Activated B cell treated with CpG ODN at 0.5 μM for 24 hours (primary cell): ENCODE measurements at regions of chr17 and their contacts with region 1.

Region 1: GRCh38 chr17:43024407-43025289 is at the start of gene RND2:
- DNase-seq: peak; percentile 79
- ATAC-seq: peak; percentile 65
- H3K4me3 Mint-ChIP-seq: peak within 1 kb of the TSS; percentile 92
- H3K27ac Mint-ChIP-seq: peak within 1 kb of the TSS; percentile 87
- H3K4me1 Mint-ChIP-seq: peaks cover 24% of the 10 kb centered on the region
- H3K27me3 Mint-ChIP-seq: no peaks in the 10 kb centered on the region
- CTCF ChIP-seq: no peak
- total RNA-seq, gene RND2: 0.05 and 0.13 TPM in 2 replicates

Region 2: DNA sequence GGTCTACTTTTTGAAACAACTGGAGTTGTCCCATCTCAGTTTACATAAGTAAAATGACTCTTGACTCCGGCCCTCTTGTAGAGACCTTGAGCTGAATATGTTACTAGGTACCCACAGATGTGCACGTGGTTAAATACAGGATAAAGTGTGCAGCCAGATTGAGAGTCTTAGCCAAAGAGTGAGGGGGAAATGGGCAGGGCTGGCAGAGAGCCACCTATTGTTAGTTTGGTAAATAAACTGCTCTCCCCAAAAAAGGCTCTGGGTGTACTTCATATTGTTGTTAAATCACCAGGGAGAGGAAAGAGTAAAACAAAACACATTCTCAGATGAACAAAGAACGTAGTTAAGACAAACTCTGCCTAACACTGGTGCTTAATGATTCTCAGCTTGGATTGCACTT is 103.7 kb before region 1 on chr17:
- CTCF ChIA-PET with region 1: no interaction called
- POLR2A ChIA-PET with region 1: no interaction called
- intact Hi-C with region 1: no loop called
- DNase-seq: no peak
- ATAC-seq: no peak
- H3K4me3 Mint-ChIP-seq: no peak overlapping the region
- H3K27ac Mint-ChIP-seq: no peak overlapping the region
- H3K4me1 Mint-ChIP-seq: no peaks in the 10 kb centered on the region
- H3K27me3 Mint-ChIP-seq: peaks cover 5% of the 10 kb centered on the region
- CTCF ChIP-seq: no peak

Region 3: GRCh38 chr17:43006639-43007551 is 17.8 kb before region 1 on chr17 and contains the start of gene IFI35:
- CTCF ChIA-PET with region 1: interaction called, 5 read pairs
- POLR2A ChIA-PET with region 1: interaction called, 22 read pairs
- intact Hi-C with region 1: loop called (anchors 2 kb)
- DNase-seq: peak; percentile 75
- ATAC-seq: peak; percentile 99
- H3K4me3 Mint-ChIP-seq: peak within 1 kb of the TSS; percentile 99
- H3K27ac Mint-ChIP-seq: peak within 1 kb of the TSS; percentile 99
- H3K4me1 Mint-ChIP-seq: peaks cover 16% of the 10 kb centered on the region
- H3K27me3 Mint-ChIP-seq: no peaks in the 10 kb centered on the region
- CTCF ChIP-seq: no peak
- total RNA-seq, gene IFI35: 41.9 and 50.5 TPM in 2 replicates

Region 4: GRCh38 chr17:43125133-43125966 is 100.7 kb after region 1 on chr17 and contains the start of gene BRCA1:
- CTCF ChIA-PET with region 1: no interaction called
- POLR2A ChIA-PET with region 1: interaction called, 9 read pairs
- intact Hi-C with region 1: loop called (anchors 1 kb)
- DNase-seq: peak; percentile 77
- ATAC-seq: peak; percentile 98
- H3K4me3 Mint-ChIP-seq: peak within 1 kb of the TSS; percentile 98
- H3K27ac Mint-ChIP-seq: peak within 1 kb of the TSS; percentile 90
- H3K4me1 Mint-ChIP-seq: peaks cover 44% of the 10 kb centered on the region
- H3K27me3 Mint-ChIP-seq: no peaks in the 10 kb centered on the region
- CTCF ChIP-seq: no peak
- total RNA-seq, gene BRCA1: 11.9 and 13.3 TPM in 2 replicates

Region 5: GRCh38 chr17:43211480-43212402 is 187.1 kb after region 1 on chr17 and contains the start of gene TMEM106A:
- CTCF ChIA-PET with region 1: interaction called, 3 read pairs
- POLR2A ChIA-PET with region 1: interaction called, 15 read pairs
- intact Hi-C with region 1: loop called (anchors 5 kb)
- DNase-seq: peak; percentile 69
- ATAC-seq: peak; percentile 89
- H3K4me3 Mint-ChIP-seq: peak within 1 kb of the TSS; percentile 100
- H3K27ac Mint-ChIP-seq: peak within 1 kb of the TSS; percentile 98
- H3K4me1 Mint-ChIP-seq: peaks cover 45% of the 10 kb centered on the region
- H3K27me3 Mint-ChIP-seq: no peaks in the 10 kb centered on the region
- CTCF ChIP-seq: no peak
- total RNA-seq, gene TMEM106A: 46.0 and 68.0 TPM in 2 replicates

Region 6: GRCh38 chr17:43360739-43361505 is 336.3 kb after region 1 on chr17:
- CTCF ChIA-PET with region 1: no interaction called
- POLR2A ChIA-PET with region 1: interaction called, 13 read pairs
- intact Hi-C with region 1: no loop called
- DNase-seq: peak; percentile 65
- ATAC-seq: peak; percentile 76
- H3K4me3 Mint-ChIP-seq: peak overlapping the region; percentile 93
- H3K27ac Mint-ChIP-seq: peak overlapping the region; percentile 100
- H3K4me1 Mint-ChIP-seq: peaks cover 15% of the 10 kb centered on the region
- H3K27me3 Mint-ChIP-seq: peaks cover 2% of the 10 kb centered on the region
- CTCF ChIP-seq: no peak